K562 (cell line): ENCODE measurements at regions of chr5 and their contacts with region 1.

Region 1: GRCh38 chr5:146203011-146203871 is at the start of gene RBM27:
- DNase-seq: peak; percentile 98 to 100 (median 100)
- ATAC-seq: peak; percentile 98
- H3K4me3 ChIP-seq: peak within 1 kb of the TSS; percentile 62
- H3K27ac ChIP-seq: peak within 1 kb of the TSS; percentile 88
- H3K4me1 ChIP-seq: peaks cover 17% of the 10 kb centered on the region in 2 experiments; a peak in 4 of 5 replicates
- H3K27me3 ChIP-seq: no peaks in the 10 kb centered on the region
- CTCF ChIP-seq: no peak
- EP300 ChIP-seq: 0 out of 2 replicates have a peak, but pooled peaks have one; percentile 1
- POLR2A ChIP-seq: peak; percentile 88
- RAD21 ChIP-seq: peak in 1 of 2 experiments; percentile 4; a peak in 1 of 4 replicates
- polyA plus RNA-seq, gene RBM27: 5.3 to 8.3 TPM

Region 2: GRCh38 chr5:146041180-146041789 is 162.0 kb before region 1 on chr5:
- CTCF ChIA-PET with region 1: no interaction called
- POLR2A ChIA-PET with region 1: no interaction called
- in situ Hi-C with region 1: no loop called
- intact Hi-C with region 1: no loop called
- DNase-seq: peak in 3 of 4 experiments; percentile 24 to 52 (median 37)
- ATAC-seq: peak; percentile 85
- H3K4me3 ChIP-seq: no peak overlapping the region
- H3K27ac ChIP-seq: no peak overlapping the region; the same call in 2 of the 3 replicates
- H3K4me1 ChIP-seq: peaks cover 6 to 33% of the 10 kb centered on the region in 2 experiments; a peak in 3 of 5 replicates
- H3K27me3 ChIP-seq: no peaks in the 10 kb centered on the region
- CTCF ChIP-seq: peak; percentile 24 to 63 (median 58); a peak in 5 of 6 replicates
- EP300 ChIP-seq: no peak
- POLR2A ChIP-seq: no peak
- RAD21 ChIP-seq: 0 out of 4 replicates have a peak, but pooled peaks have one; percentile 11 to 37

Region 3: GRCh38 chr5:146059460-146060220 is 143.6 kb before region 1 on chr5:
- CTCF ChIA-PET with region 1: no interaction called
- POLR2A ChIA-PET with region 1: no interaction called
- in situ Hi-C with region 1: no loop called
- intact Hi-C with region 1: no loop called
- DNase-seq: peak in 3 of 4 experiments; percentile 18 to 37 (median 23)
- ATAC-seq: peak; percentile 19; the same call in 2 of the 3 replicates
- H3K4me3 ChIP-seq: no peak overlapping the region
- H3K27ac ChIP-seq: no peak overlapping the region
- H3K4me1 ChIP-seq: peaks cover 3 to 4% of the 10 kb centered on the region in 2 experiments; a peak in 3 of 5 replicates
- H3K27me3 ChIP-seq: peaks cover 20 to 21% of the 10 kb centered on the region in 2 experiments
- CTCF ChIP-seq: no peak
- EP300 ChIP-seq: no peak
- POLR2A ChIP-seq: no peak
- RAD21 ChIP-seq: no peak

Region 4: GRCh38 chr5:146213210-146213826 is 10.1 kb after region 1 on chr5:
- CTCF ChIA-PET with region 1: no interaction called
- POLR2A ChIA-PET with region 1: interaction called, 11 read pairs
- in situ Hi-C with region 1: no loop called
- intact Hi-C with region 1: no loop called
- DNase-seq: peak in 2 of 4 experiments; percentile 26 to 70
- ATAC-seq: peak; percentile 44
- H3K4me3 ChIP-seq: no peak overlapping the region
- H3K27ac ChIP-seq: no peak overlapping the region
- H3K4me1 ChIP-seq: peaks cover 14 to 19% of the 10 kb centered on the region in 2 experiments; a peak in 4 of 5 replicates
- H3K27me3 ChIP-seq: no peaks in the 10 kb centered on the region
- CTCF ChIP-seq: no peak
- EP300 ChIP-seq: no peak
- POLR2A ChIP-seq: no peak
- RAD21 ChIP-seq: no peak